ENCODE measurements at regions of chr2 and their contacts with region 1.

Region 1: DNA sequence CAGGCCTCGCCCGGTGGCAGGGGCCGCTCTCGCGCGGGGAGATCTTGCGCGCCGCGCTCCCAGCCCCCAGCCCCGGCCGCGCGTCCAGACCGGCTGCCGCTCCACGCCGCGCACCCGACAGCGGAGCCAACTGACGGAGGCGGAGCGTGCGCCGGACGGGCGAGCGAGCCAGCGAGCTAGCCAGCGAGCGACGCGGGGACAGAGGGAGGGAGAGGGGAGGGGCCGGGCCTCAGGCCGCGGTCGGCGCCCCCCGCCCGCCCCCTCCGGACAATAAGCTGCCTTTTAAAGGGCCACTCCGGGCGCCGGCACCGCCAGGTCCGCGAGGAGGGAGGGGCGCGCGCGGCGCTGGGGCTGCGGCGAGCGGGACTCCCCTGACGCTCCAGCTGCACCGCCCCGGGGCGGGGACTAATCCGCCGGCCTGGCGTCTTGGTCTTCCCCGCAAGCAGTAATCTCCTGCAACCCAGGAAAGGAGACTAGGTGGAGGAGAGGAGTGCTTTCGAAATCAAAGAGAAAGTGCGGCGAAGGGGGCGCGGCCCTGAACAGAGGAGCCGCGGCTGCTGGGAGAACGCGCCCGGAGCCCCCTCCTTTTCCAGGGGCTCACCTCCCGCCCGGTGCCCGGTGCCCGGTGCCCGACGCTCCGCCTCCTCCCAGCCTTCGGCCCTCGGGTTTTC is at the start of gene BIN1:
- DNase-seq: peak; percentile 86 to 92 (median 87)
- ATAC-seq: peak; percentile 63 to 91 (median 86)
- H3K4me3 ChIP-seq: peak within 1 kb of the TSS; percentile 59 to 90 (median 72)
- H3K27ac ChIP-seq: peak within 1 kb of the TSS in 11 of 12 donors; percentile 34 to 83 (median 71)
- H3K4me1 ChIP-seq: peaks cover 0 to 29% (median 14%) of the 10 kb centered on the region in 12 donors
- H3K27me3 ChIP-seq: peaks cover 0 to 8% (median 0%) of the 10 kb centered on the region in 9 donors
- CTCF ChIP-seq: no peak
- POLR2A ChIP-seq: peak in 1 of 2 donors; percentile 56
- total RNA-seq, gene BIN1: 10.9 to 22.2 (median 16.8) TPM

Region 2: GRCh38 chr2:127000937-127001336 is 106.1 kb before region 1 on chr2:
- intact Hi-C with region 1: no loop called
- DNase-seq: no peak
- ATAC-seq: no peak
- H3K4me3 ChIP-seq: no peak overlapping the region
- H3K27ac ChIP-seq: no peak overlapping the region
- H3K4me1 ChIP-seq: no peaks in the 10 kb centered on the region
- H3K27me3 ChIP-seq: no peaks in the 10 kb centered on the region
- CTCF ChIP-seq: no peak
- POLR2A ChIP-seq: no peak

Region 3: DNA sequence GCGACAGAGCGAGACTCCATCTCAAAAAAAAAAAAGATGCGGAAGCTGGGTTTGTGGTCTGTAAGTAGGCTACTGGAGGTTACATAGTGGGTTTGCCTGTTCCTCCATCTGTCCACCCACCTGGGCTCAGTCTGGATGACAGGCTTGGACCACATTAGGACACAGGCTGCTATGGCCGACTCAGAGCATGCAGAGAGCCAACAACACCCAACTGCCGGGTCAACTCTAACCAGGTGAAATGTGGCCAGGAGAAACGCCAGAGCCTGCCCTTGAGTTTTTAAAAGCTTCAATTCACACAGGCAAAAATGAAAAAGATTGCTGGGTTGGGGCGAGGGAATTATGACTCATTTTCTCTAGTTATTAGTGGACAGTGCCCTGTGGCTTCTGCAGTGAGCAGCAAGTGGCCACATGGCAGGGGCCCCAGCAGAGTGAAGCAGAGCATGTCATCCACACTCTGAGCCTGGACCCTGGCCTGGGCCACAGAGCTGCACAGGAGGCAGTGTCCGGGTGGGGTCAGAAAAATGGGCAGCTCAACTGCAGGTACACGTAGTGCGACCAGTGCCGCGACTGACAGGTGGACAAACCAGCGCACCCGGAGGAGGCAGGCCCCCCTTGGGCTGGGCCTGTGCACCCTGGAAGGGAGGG is 67.6 kb before region 1 on chr2:
- intact Hi-C with region 1: no loop called
- DNase-seq: peak in 1 of 5 donors; percentile 23
- ATAC-seq: peak in 1 of 4 donors; percentile 16
- H3K4me3 ChIP-seq: no peak overlapping the region
- H3K27ac ChIP-seq: no peak overlapping the region
- H3K4me1 ChIP-seq: no peaks in the 10 kb centered on the region
- H3K27me3 ChIP-seq: no peaks in the 10 kb centered on the region
- CTCF ChIP-seq: no peak
- POLR2A ChIP-seq: no peak

Region 4: GRCh38 chr2:127149384-127149783 is 42.3 kb after region 1 on chr2:
- intact Hi-C with region 1: loop called in 1 of 10 experiments (anchors 5 kb)
- DNase-seq: no peak
- ATAC-seq: no peak
- H3K4me3 ChIP-seq: no peak overlapping the region
- H3K27ac ChIP-seq: no peak overlapping the region
- H3K4me1 ChIP-seq: peaks cover 0 to 28% (median 11%) of the 10 kb centered on the region in 12 donors
- H3K27me3 ChIP-seq: no peaks in the 10 kb centered on the region
- CTCF ChIP-seq: no peak
- POLR2A ChIP-seq: no peak